ENCODE measurements at regions of chr15 and their contacts with region 1.

Region 1: GRCh38 chr15:64856429-64857145 is 14.9 kb downstream of the PLEKHO2 start:
- DNase-seq: peak; percentile 83 to 85
- ATAC-seq: peak; percentile 78
- H3K4me3 ChIP-seq: no peak overlapping the region
- H3K27ac ChIP-seq: peak overlapping the region; percentile 84 to 92
- H3K4me1 ChIP-seq: peaks cover 0 to 3% of the 10 kb centered on the region in 2 donors
- H3K27me3 ChIP-seq: no peaks in the 10 kb centered on the region

Region 2: DNA sequence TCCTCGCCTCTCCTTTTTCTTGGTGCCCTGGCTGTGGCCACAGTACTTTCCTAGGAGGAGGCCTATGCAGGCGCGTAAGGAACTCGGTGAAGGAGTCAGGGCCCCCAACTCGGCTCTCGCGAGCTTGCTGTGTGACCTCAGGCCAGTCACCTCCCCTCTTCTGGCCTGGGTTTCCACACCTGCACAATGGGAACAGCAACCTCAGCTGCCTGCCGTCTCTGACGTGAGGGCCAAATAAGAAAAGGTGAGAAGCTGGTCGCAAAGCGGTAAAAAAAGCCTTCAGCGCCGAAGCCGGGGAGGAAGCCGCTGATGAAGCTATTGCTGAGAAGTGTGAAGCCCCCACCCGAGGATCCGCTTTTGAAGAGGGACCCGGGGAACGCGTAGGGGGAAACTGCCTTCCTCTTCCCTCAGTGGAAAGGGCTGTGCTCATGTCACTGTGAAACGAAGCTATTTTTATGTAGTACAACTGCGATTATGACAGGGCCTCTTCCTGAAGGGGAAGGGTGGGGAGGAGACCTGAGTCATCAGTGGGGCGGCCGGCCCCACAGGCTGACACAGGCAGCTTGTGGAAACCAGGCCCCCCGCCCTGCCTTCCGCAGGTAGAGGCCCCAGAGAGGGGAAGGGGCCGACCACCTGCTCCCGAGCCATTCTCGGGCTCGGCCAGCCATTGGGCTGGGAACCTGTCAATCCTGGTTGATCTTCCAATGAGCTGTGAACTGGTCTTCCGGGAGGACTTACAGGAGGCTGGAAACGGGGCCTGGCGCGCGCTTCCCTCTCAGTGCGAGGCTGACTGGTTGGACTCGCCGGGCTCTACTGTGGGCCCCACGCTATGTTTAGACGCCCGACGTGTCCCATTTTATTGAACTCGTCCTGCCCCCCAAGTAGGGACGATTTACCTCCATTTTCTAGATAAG is 37.2 kb after region 1 on chr15:
- intact Hi-C with region 1: loop called in 1 of 2 experiments (anchors 5 kb)
- DNase-seq: peak; percentile 96
- ATAC-seq: peak; percentile 91
- H3K4me3 ChIP-seq: no peak overlapping the region
- H3K27ac ChIP-seq: peak overlapping the region in 1 of 2 donors; percentile 6
- H3K4me1 ChIP-seq: peaks cover 0 to 2% of the 10 kb centered on the region in 2 donors
- H3K27me3 ChIP-seq: no peaks in the 10 kb centered on the region

Region 3: GRCh38 chr15:65409036-65409631 is 552.5 kb after region 1 on chr15:
- intact Hi-C with region 1: no loop called
- DNase-seq: peak in 1 of 2 donors; percentile 42
- ATAC-seq: no peak
- H3K4me3 ChIP-seq: no peak overlapping the region
- H3K27ac ChIP-seq: no peak overlapping the region
- H3K4me1 ChIP-seq: no peaks in the 10 kb centered on the region
- H3K27me3 ChIP-seq: no peaks in the 10 kb centered on the region

Measured in aorta (tissue), 5 donors.